Cardiac septum (tissue), 1 donor: ENCODE measurements at regions of chr7 and their contacts with region 1.

Region 1: GRCh38 chr7:88111136-88111743 is 108.6 kb downstream of the SRI start:
- DNase-seq: no peak

Region 2: DNA sequence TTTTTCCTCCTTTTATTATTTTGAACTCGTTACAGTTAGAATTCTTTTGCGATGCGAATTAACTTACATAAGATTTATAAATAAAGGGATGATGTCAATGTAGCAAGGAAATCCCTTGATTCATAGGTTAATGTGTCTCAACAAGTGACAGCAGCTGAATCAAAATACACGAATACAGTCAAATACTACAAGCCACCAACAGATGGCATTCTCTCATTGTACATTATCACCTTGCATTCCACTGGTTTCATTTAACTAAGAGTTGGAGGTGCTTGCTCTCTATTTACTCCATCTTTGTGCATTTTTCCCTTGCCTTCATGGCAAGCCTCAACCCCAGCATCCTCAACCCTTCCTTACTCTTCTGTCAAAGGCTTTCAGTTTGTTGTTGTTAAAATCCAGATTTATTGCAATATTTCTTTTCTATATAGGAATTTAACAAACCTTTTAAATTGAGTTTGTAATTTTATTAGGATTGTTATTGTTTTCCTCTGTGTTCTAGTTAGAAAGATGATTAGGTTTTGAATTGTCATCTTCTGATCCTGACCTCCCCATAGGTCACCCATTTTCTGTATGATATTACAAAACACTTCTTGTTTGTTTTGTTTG is 313.3 kb before region 1 on chr7:
- intact Hi-C with region 1: loop called (anchors 5 kb)
- DNase-seq: no peak

Region 3: GRCh38 chr7:87934699-87935383 is 176.4 kb before region 1 on chr7:
- intact Hi-C with region 1: loop called (anchors 5 kb)
- DNase-seq: no peak

Region 4: GRCh38 chr7:88001744-88002530 is 109.3 kb before region 1 on chr7:
- intact Hi-C with region 1: no loop called
- DNase-seq: no peak